Ovary (tissue), 10 donors: ENCODE measurements at regions of chr1 and their contacts with region 1.

Region 1: GRCh38 chr1:17596651-17597509 is 57.4 kb downstream of the ARHGEF10L start:
- DNase-seq: no peak
- H3K4me3 ChIP-seq: no peak overlapping the region
- H3K27ac ChIP-seq: no peak overlapping the region
- H3K4me1 ChIP-seq: no peaks in the 10 kb centered on the region
- H3K27me3 ChIP-seq: no peaks in the 10 kb centered on the region
- CTCF ChIP-seq: no peak
- EP300 ChIP-seq: no peak
- POLR2A ChIP-seq: no peak

Region 2: GRCh38 chr1:16026723-16027484 is 1570.0 kb before region 1 on chr1:
- intact Hi-C with region 1: no loop called
- DNase-seq: peak; percentile 64 to 75 (median 72)
- H3K4me3 ChIP-seq: peak overlapping the region; percentile 27
- H3K27ac ChIP-seq: peak overlapping the region in 1 of 2 donors; percentile 66
- H3K4me1 ChIP-seq: peaks cover 4% of the 10 kb centered on the region
- H3K27me3 ChIP-seq: no peaks in the 10 kb centered on the region
- CTCF ChIP-seq: no peak
- EP300 ChIP-seq: no peak
- POLR2A ChIP-seq: no peak

Region 3: GRCh38 chr1:17527036-17527914 is 69.6 kb before region 1 on chr1:
- intact Hi-C with region 1: loop called in 1 of 4 experiments (anchors 10 kb)
- DNase-seq: peak in 2 of 5 donors; percentile 39 to 42
- H3K4me3 ChIP-seq: no peak overlapping the region
- H3K27ac ChIP-seq: peak overlapping the region; percentile 17 to 36
- H3K4me1 ChIP-seq: peaks cover 9% of the 10 kb centered on the region
- H3K27me3 ChIP-seq: no peaks in the 10 kb centered on the region
- CTCF ChIP-seq: no peak
- EP300 ChIP-seq: no peak
- POLR2A ChIP-seq: no peak